Activated CD8-positive, alpha-beta T cell treated with anti-CD3 and anti-CD28 coated beads for 36 hours (primary cell): ENCODE measurements at regions of chr20 and their contacts with region 1.

Region 1: DNA sequence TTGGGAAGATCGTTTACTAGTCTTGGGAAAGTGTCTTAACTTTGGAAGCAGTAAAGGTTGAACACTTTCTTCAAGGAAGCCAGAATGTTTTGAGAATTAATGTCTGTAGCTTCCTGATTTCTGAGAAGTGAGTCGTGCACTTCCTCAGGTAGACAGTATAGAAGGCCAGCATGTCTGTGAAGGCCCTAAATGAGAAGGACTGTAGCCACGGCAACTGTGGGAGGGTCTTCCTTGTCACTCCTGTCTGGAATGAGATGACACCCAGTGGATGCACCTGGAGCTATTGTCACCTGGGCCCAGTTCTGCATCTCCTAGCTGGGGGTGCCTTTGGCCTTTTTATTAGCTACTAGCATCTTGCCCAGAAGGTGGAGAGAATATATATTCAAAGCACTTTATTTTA is 8.8 kb downstream of the STX16 start:
- DNase-seq: peak; percentile 35
- ATAC-seq: peak; percentile 59
- H3K4me3 Mint-ChIP-seq: peak overlapping the region; percentile 61
- H3K27ac Mint-ChIP-seq: peak overlapping the region; percentile 98
- H3K4me1 Mint-ChIP-seq: peaks cover 76% of the 10 kb centered on the region
- H3K27me3 Mint-ChIP-seq: no peaks in the 10 kb centered on the region
- CTCF ChIP-seq: no peak

Region 2: DNA sequence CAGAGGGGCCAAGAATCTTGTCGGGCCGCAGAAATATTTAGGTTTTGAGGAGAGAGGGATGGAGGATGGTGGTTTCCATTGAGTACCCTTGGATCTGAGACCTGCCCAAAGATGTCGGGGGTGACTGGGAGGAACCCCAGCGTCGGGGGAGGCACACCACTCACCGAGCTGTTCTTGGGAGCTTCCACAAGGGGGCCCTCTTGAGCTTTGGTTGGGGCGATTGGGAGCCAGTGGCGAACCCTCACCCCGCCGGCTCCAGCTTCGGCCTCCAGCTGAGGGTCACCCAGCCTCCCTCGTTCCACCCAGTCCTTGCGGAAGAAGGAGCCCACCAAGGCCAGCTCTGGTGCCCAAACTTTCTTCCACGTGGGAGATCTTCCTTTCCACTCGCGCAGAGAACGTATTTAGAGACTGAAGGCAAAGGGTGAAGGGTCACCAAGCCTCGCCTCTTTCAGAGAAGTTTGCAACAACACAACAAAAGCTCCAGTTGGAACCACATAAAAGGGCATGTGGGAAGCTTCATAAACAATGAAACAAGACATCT is 178.3 kb before region 1 on chr20:
- CTCF ChIA-PET with region 1: interaction called, 11 read pairs
- POLR2A ChIA-PET with region 1: no interaction called
- intact Hi-C with region 1: no loop called
- DNase-seq: peak; percentile 68
- ATAC-seq: peak; percentile 94
- H3K4me3 Mint-ChIP-seq: no peak overlapping the region
- H3K27ac Mint-ChIP-seq: no peak overlapping the region
- H3K4me1 Mint-ChIP-seq: no peaks in the 10 kb centered on the region
- H3K27me3 Mint-ChIP-seq: peaks cover 8% of the 10 kb centered on the region
- CTCF ChIP-seq: peak; percentile 86

Region 3: GRCh38 chr20:58627212-58628072 is 32.4 kb before region 1 on chr20:
- CTCF ChIA-PET with region 1: no interaction called
- POLR2A ChIA-PET with region 1: no interaction called
- intact Hi-C with region 1: no loop called
- DNase-seq: no peak
- ATAC-seq: no peak
- H3K4me3 Mint-ChIP-seq: no peak overlapping the region
- H3K27ac Mint-ChIP-seq: no peak overlapping the region
- H3K4me1 Mint-ChIP-seq: peaks cover 6% of the 10 kb centered on the region
- H3K27me3 Mint-ChIP-seq: no peaks in the 10 kb centered on the region
- CTCF ChIP-seq: no peak

Region 4: DNA sequence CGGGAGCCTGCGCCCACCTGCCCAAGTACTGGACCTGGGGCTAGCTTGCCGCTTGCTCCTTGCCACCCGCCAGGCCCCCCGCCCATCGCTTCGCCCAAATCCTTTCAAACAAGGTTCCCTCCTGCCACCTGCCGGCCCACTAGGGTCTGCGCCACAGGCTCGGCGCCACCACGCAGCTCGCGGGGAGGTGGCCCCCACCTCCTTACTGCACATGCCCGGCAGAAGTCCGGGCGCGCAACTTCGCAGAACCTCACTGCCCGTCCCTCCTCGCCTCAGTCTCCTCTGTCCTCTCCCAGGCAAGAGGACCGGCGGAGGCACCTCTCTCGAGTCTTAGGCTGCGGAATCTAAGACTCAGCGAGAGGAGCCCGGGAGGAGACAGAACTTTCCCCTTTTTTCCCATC is 179.6 kb after region 1 on chr20:
- CTCF ChIA-PET with region 1: interaction called, 3 read pairs
- POLR2A ChIA-PET with region 1: no interaction called
- intact Hi-C with region 1: loop called (anchors 5 kb)
- DNase-seq: peak; percentile 68
- ATAC-seq: peak; percentile 72
- H3K4me3 Mint-ChIP-seq: peak overlapping the region; percentile 46
- H3K27ac Mint-ChIP-seq: no peak overlapping the region
- H3K4me1 Mint-ChIP-seq: peaks cover 25% of the 10 kb centered on the region
- H3K27me3 Mint-ChIP-seq: peaks cover 41% of the 10 kb centered on the region
- CTCF ChIP-seq: peak; percentile 55

Region 5: GRCh38 chr20:58993332-58994201 is 333.7 kb after region 1 on chr20:
- CTCF ChIA-PET with region 1: no interaction called
- POLR2A ChIA-PET with region 1: no interaction called
- intact Hi-C with region 1: no loop called
- DNase-seq: no peak
- ATAC-seq: no peak
- H3K4me3 Mint-ChIP-seq: no peak overlapping the region
- H3K27ac Mint-ChIP-seq: peak overlapping the region; percentile 49
- H3K4me1 Mint-ChIP-seq: no peaks in the 10 kb centered on the region
- H3K27me3 Mint-ChIP-seq: no peaks in the 10 kb centered on the region
- CTCF ChIP-seq: no peak